K562 (cell line): ENCODE measurements at regions of chr16 and their contacts with region 1.

Region 1: DNA sequence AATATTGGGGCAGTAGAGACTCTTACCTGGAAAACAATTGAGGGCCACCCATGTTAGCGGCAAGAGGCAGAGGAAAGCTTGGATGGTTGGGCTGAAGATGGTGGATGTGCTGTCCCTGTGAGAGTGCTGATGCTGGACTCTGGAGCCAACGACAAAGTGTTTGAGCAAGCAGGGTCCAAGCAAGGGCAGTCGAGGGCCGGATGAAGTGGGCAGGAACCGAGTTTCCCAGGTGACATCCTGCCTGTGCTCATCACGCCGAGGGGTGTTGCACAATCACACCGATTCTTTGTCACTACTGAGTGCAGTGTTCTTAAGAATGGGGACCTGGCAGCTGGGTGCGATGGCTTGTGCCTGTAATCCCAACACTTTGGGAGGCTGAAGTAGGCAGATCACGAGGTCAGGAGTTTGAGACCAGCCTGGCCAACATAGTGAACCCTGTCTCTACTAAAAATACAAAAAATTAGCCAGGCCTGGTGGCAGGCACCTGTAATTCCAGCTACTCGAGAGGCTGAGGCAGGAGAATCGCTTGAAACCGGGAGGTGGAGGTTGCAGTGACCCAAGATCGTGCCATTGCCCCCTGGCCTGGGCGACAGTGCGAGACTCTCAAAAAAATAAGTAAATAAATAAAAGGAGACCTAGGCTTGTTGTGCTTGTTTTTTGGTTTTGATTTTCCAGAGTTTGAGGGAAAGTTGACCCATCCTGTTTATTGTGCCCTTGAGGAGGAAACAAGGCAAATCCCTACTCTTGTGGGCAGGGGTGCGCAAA is 6.1 kb downstream of the PYCARD start:
- DNase-seq: no peak
- ATAC-seq: peak; percentile 7
- H3K4me3 ChIP-seq: no peak overlapping the region
- H3K27ac ChIP-seq: peak overlapping the region; percentile 10; the same call in 1 of the 3 replicates
- H3K4me1 ChIP-seq: peaks cover 10 to 18% of the 10 kb centered on the region in 2 experiments; a peak in 4 of 5 replicates
- H3K27me3 ChIP-seq: no peaks in the 10 kb centered on the region
- CTCF ChIP-seq: no peak
- EP300 ChIP-seq: no peak
- POLR2A ChIP-seq: peak; percentile 70
- RAD21 ChIP-seq: no peak

Region 2: DNA sequence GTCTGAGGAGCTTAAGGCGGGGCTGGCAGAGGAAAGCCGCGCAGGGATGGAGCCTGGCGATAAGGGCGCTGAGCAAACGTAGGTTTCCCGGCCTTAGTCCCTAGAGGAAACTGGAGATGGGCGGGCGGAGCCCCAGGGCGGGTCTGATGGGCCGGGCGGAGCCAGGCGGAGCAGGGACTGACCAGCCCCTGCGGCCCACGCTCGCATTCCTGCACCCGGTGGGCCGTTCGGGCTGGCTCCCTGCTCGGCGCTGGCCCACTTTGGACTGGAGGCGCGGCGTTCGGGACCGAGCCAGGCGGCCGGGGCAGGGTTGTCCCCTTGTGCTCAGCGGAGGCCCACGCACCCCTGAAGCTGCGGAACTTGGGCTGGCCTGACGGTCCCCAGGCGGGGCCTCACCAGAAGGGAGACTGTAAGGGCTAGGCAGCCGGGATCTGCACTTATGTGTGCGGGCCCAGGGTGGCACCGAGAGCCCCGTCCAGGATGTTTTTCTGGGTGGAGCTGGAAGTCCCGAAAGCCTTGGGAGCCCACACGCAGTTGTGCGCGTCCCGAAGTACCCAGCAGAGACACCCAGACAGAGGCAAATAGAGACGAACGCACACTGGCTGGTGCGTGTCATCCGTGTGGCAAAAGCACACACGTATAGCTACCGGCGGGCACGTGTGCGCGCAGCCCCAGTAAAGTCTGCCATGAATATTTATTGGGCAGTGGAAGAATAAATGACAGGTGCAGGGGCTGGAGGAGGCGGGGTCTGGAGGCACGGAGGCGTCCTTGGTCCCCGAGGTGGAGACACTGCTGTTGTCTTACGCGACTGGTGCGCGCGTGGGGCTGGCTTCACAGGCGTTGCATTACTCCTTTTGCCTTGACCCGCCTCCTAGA is 19.0 kb after region 1 on chr16:
- CTCF ChIA-PET with region 1: no interaction called
- POLR2A ChIA-PET with region 1: interaction called, 33 read pairs
- in situ Hi-C with region 1: no loop called
- intact Hi-C with region 1: no loop called
- DNase-seq: peak; percentile 88 to 98 (median 95)
- ATAC-seq: peak; percentile 97
- H3K4me3 ChIP-seq: peak overlapping the region; percentile 41
- H3K27ac ChIP-seq: no peak overlapping the region
- H3K4me1 ChIP-seq: peaks cover 0 to 41% of the 10 kb centered on the region in 2 experiments; a peak in 4 of 5 replicates
- H3K27me3 ChIP-seq: no peaks in the 10 kb centered on the region
- CTCF ChIP-seq: no peak
- EP300 ChIP-seq: no peak
- POLR2A ChIP-seq: no peak
- RAD21 ChIP-seq: no peak; a peak in 1 of 4 replicates